ENCODE measurements at regions of chr3 and their contacts with region 1.

Region 1: DNA sequence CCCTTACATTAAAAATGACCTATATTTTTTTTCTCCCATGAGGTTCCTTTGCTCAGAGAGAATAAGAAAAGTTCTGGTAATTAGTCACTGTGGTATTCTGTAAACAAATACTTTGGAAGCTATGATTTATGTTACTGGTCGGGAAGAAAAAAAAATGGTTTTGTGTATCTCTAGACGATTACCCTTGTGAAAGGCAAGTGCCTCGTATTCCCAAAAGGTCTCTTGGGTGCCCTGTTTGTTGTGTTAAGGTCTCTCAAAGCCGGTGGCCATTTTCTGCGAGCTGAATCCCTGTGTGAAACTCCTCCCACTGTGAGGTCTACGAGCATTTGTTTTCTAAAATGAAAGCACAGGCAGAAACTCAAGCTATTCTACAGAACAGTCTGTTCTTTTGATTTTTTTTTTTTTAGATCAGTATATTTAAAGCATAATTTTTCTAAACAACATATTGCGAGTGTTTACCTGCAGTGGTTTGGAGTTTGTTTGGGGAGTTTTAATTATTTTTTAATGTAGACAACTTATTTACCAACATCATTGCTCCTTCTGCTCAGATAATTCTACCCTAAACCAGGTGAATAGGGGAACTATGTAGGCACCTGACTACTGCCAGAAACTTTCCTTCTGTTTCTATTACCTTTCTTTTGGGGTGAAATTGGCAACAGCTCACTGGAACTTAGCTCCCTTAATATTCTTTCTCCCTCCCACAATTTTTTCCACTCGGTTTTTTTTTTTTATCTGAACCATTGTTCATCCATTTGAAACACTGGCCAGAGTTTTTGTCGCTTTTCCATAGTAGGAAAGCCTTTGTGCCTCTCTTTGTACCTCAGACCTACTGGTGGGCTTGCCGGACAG is 44.0 kb downstream of the ZBTB38 start:
- DNase-seq: peak; percentile 55
- H3K4me3 Mint-ChIP-seq: peak overlapping the region; percentile 85
- H3K27ac Mint-ChIP-seq: peak overlapping the region; percentile 98
- H3K4me1 Mint-ChIP-seq: peaks cover 61% of the 10 kb centered on the region
- H3K27me3 Mint-ChIP-seq: no peaks in the 10 kb centered on the region

Region 2: DNA sequence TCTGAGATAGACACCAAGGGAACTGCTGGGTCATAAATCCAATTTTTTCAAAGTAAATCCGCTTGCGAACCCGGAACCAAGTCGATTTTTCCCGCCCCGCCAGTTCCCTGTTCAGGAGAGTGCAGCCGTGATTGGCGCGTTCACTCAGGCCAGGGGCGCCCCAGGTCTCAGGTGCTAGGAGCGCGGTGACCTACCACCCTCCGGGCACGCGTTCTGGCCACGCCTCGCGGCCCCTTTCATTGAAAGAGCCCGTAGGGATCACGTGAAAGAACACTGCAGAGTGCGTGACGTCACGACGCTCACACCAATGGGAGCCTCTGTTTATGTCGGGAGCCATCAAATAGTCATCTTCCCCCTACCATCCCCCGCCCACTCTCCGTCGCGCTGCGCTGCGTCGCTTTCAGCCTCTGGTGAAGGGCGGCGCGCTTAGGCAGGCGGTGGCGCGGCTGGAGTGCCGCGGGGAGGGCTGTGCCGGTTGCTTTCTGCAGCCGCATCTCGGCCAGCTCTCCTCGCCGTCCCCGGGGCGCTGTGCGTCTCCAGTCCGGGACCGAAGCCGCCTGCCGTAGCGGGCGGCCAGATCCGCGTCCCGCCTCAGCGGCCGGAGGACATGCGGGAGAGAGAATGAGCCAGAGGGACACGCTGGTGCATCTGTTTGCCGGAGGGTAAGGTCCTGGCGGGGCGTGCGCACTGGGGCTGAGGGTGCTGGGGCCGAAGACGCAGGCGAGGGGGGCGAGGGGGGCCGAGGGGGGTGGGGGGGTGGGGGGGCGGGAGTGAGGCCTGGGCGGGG is 470.7 kb before region 1 on chr3 and contains the start of gene SLC25A36:
- intact Hi-C with region 1: loop called (anchors 5 kb)
- DNase-seq: peak; percentile 95
- H3K4me3 Mint-ChIP-seq: peak within 1 kb of the TSS; percentile 92
- H3K27ac Mint-ChIP-seq: peak within 1 kb of the TSS; percentile 95
- H3K4me1 Mint-ChIP-seq: peaks cover 36% of the 10 kb centered on the region
- H3K27me3 Mint-ChIP-seq: peaks cover 12% of the 10 kb centered on the region
- total RNA-seq, gene SLC25A36: 49.5 and 52.3 TPM in 2 replicates

Region 3: GRCh38 chr3:141370065-141370533 is 42.2 kb before region 1 on chr3:
- intact Hi-C with region 1: loop called (anchors 2 kb)
- DNase-seq: peak; percentile 50
- H3K4me3 Mint-ChIP-seq: no peak overlapping the region
- H3K27ac Mint-ChIP-seq: no peak overlapping the region
- H3K4me1 Mint-ChIP-seq: peaks cover 27% of the 10 kb centered on the region
- H3K27me3 Mint-ChIP-seq: no peaks in the 10 kb centered on the region

Region 4: GRCh38 chr3:141452036-141452435 is 39.7 kb after region 1 on chr3:
- intact Hi-C with region 1: loop called (anchors 2 kb)
- DNase-seq: peak; percentile 26
- H3K4me3 Mint-ChIP-seq: no peak overlapping the region
- H3K27ac Mint-ChIP-seq: no peak overlapping the region
- H3K4me1 Mint-ChIP-seq: peaks cover 18% of the 10 kb centered on the region
- H3K27me3 Mint-ChIP-seq: no peaks in the 10 kb centered on the region

Region 5: DNA sequence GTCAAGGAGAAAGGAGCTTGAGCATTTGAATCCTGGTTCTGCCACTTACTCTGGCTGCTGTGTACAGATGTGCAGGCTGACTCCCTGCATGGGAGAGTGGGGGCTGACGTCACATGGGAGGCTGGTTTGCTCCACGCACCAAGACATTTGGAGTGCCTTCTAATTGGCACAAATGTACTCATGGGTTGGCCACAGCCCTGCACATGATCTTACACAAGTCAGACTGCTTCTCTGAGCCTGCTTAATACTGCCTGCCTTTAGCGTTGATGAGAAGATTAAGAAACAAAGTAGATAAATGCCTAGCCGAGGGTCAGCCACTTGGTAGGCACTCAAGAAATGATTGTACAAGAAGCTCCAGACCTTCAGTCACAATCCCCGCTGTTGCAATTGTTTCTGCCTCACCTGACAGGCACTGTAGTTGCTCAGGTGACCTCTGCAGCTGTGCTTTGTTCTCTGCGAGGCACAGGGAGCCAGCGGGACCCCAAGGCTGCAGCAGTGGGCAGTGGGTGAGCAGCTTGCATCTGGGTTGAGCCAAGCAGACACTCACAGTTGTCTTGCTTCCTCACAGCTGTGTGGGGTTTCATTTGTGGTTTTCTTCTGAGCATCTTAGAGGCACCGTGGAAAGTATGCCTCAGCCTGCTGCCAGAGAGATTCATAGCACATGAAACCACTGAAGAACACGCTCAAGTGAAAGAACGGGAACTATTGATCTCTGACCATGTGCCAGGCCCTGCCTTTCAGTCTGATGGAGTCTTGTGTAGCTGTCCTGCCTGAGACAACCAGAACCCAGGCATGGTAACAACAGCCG is 384.0 kb after region 1 on chr3:
- intact Hi-C with region 1: loop called (anchors 5 kb)
- DNase-seq: peak; percentile 74
- H3K4me3 Mint-ChIP-seq: peak overlapping the region; percentile 79
- H3K27ac Mint-ChIP-seq: peak overlapping the region; percentile 99
- H3K4me1 Mint-ChIP-seq: peaks cover 47% of the 10 kb centered on the region
- H3K27me3 Mint-ChIP-seq: peaks cover 3% of the 10 kb centered on the region